Astrocyte of the cerebellum (primary cell): ENCODE measurements at regions of chr20 and their contacts with region 1.

Region 1: GRCh38 chr20:22346716-22347115 is 237.7 kb downstream of the FOXA2 start:
- DNase-seq: no peak
- H3K4me3 ChIP-seq: no peak overlapping the region
- CTCF ChIP-seq: no peak

Region 2: GRCh38 chr20:22303523-22303922 is 43.2 kb before region 1 on chr20:
- in situ Hi-C with region 1: no loop called
- DNase-seq: no peak
- H3K4me3 ChIP-seq: no peak overlapping the region
- CTCF ChIP-seq: no peak

Region 3: DNA sequence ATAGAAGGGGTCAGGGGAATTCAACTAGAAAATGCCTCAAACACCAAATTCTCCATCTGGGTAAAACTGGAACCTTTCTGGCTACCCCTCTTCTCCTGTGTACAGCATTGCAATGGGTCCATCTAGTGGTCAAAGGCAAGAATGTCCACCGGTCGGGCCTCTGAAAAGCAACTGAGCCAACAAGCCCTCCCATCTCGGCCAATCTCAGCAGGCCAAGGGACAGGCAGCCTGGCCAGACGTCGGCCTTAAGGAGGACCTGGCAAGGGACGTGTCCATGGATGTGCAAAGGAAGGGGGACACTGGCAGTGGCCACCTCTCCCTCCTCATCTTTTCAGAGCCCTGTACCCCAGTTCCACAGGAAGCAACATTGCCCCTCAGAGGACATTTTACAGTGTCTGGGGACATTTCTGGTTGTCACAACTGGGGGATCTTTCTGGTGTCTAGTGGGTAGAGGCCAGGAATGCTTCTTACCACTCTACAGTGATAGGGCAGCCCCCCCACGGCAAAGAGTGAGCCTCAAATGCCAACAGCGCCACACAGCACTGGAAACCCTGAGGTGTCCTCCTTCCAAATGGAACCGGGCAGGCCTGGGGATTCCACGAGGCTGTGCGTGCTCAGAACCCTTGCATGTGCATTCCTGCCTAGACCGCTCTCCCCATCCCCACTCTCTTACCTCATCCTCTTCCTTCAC is 337.5 kb after region 1 on chr20:
- in situ Hi-C with region 1: loop called (anchors 5 kb)
- DNase-seq: peak; percentile 50
- H3K4me3 ChIP-seq: no peak overlapping the region
- CTCF ChIP-seq: peak; percentile 91